ENCODE measurements at regions of chr6 and their contacts with region 1.

Region 1: DNA sequence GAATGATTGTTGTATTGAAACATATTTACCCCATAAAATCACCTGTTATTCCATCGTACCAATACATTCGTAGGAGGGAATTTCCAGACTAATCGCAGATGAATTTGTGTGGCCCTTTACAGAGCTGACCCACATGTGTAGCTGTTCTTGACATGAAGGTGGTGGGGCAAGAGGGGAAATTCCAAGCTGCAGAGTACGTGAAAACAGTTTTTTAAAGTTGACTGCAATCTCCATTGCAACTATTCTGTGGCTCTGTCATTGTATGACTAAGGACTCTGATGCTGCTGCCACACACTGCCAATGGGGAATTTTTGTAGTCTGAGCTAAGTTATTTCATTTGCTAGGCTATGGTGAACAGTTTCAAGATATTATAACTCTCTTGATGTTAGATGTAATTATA is 46.4 kb upstream of the ADTRP start:
- DNase-seq: peak; percentile 16
- H3K4me3 Mint-ChIP-seq: no peak overlapping the region
- H3K27ac Mint-ChIP-seq: peak overlapping the region; percentile 79
- H3K4me1 Mint-ChIP-seq: peaks cover 25% of the 10 kb centered on the region
- H3K27me3 Mint-ChIP-seq: peaks cover 1% of the 10 kb centered on the region

Region 2: DNA sequence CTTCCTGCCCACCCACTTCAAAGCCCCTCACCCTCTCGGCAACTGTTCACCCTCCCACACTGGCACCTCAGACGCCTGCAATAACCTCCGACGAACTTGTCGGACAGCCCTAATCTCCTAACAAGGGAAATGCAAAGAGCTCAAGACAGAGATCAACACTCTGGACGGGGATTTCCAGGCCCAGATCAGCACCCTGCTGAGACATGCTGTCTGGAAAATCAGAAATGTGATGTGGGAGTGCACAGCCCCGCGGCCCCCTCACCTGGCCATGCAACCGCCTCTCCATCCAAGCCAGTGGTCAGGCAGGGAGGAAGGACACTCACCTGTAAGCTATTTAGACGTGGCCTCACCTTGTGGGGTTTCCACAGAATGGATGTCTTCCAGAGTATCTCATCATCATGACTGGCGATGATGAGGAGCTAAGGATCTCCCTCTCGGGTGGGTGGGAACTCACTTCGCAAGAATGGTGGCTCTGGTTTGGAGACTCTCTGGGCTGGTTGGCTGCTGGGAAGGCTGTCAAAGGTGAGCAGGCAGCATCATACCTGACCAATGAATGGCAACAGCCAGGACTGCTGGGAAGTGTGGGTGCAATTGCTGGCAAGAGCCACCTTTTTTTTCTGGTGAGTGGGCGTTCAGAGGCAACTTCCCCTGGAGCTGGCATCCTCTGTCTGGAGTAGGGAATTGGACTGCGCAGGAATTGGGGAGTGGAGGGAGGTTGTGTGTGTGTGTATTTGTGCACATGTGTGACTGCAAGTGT is 18.2 kb before region 1 on chr6:
- intact Hi-C with region 1: loop called (anchors 1 kb)
- DNase-seq: peak; percentile 3
- H3K4me3 Mint-ChIP-seq: peak overlapping the region; percentile 34
- H3K27ac Mint-ChIP-seq: peak overlapping the region; percentile 82
- H3K4me1 Mint-ChIP-seq: peaks cover 53% of the 10 kb centered on the region
- H3K27me3 Mint-ChIP-seq: no peaks in the 10 kb centered on the region

Region 3: GRCh38 chr6:11854408-11855165 is 29.6 kb after region 1 on chr6:
- intact Hi-C with region 1: no loop called
- DNase-seq: no peak
- H3K4me3 Mint-ChIP-seq: no peak overlapping the region
- H3K27ac Mint-ChIP-seq: no peak overlapping the region
- H3K4me1 Mint-ChIP-seq: no peaks in the 10 kb centered on the region
- H3K27me3 Mint-ChIP-seq: no peaks in the 10 kb centered on the region

Measured in activated T-helper 1 cell treated with anti-CD3 and anti-CD28 coated beads, Interleukin-12 subunit alpha, Interleukin-12 subunit beta, Interleukin-2, Interleukin-4 antibody, amounts not matched to agents 30 ng/mL and 10 ng/mL and 1 ng/mL, durations not matched to agents 14 hours and 24 hours and 36 hours (primary cell).